IMR-90 (cell line): ENCODE measurements at regions of chr12 and their contacts with region 1.

Region 1: DNA sequence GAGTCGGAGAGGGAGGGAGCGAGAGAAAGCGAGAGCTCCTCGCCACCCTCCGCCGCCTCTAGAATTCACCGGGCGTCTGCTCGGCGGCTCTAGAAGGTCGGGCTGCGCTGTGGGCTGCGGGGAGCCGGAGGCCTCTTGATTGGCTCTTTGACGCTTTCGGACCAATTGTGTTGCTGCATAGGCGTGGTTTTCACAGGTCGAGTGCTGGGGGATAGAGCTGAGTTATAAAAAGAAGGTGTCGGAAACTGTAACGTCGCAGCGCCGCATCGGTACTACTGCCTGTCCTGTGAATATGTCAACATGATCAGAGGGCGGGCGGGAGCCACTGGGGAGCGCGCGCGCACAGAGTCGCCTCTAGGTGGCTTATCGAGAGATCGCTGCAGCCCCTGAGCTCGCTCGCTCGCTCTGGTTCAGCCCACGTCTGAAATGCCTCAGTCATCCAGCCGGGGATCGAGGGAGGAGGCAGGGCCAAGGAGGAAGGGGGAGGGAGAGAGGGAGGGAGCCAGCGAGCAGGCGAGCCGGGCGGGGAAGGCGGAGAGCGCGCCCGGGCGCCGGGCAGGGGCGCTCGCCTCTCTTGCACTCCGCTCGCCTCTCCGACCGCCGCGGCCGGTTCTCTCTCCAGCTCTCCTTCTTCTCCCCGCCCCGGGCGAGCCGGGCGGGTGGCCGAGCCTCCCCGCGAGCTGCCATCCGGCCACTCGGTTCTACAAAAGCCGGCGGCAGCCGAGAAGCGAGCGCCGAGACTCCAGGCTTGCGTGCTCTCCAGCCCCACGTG is at the start of gene TBX3:
- DNase-seq: peak; percentile 99
- ATAC-seq: peak; percentile 81
- H3K4me3 ChIP-seq: peak within 1 kb of the TSS; percentile 69
- H3K27ac ChIP-seq: peak within 1 kb of the TSS; percentile 95
- H3K4me1 ChIP-seq: peaks cover 29% of the 10 kb centered on the region
- H3K27me3 ChIP-seq: no peaks in the 10 kb centered on the region
- CTCF ChIP-seq: peak; percentile 66
- POLR2A ChIP-seq: peak; percentile 98
- RAD21 ChIP-seq: peak; percentile 60
- total RNA-seq, gene TBX3: 15.8 and 18.6 TPM in 2 replicates

Region 2: GRCh38 chr12:114547636-114548035 is 136.6 kb before region 1 on chr12:
- CTCF ChIA-PET with region 1: no interaction called
- POLR2A ChIA-PET with region 1: no interaction called
- dilution Hi-C with region 1: no loop called
- in situ Hi-C with region 1: no loop called
- intact Hi-C with region 1: no loop called
- DNase-seq: no peak
- ATAC-seq: no peak
- H3K4me3 ChIP-seq: no peak overlapping the region
- H3K27ac ChIP-seq: no peak overlapping the region
- H3K4me1 ChIP-seq: no peaks in the 10 kb centered on the region
- H3K27me3 ChIP-seq: no peaks in the 10 kb centered on the region; the same call in none of the 2 replicates
- CTCF ChIP-seq: no peak
- POLR2A ChIP-seq: no peak
- RAD21 ChIP-seq: no peak

Region 3: DNA sequence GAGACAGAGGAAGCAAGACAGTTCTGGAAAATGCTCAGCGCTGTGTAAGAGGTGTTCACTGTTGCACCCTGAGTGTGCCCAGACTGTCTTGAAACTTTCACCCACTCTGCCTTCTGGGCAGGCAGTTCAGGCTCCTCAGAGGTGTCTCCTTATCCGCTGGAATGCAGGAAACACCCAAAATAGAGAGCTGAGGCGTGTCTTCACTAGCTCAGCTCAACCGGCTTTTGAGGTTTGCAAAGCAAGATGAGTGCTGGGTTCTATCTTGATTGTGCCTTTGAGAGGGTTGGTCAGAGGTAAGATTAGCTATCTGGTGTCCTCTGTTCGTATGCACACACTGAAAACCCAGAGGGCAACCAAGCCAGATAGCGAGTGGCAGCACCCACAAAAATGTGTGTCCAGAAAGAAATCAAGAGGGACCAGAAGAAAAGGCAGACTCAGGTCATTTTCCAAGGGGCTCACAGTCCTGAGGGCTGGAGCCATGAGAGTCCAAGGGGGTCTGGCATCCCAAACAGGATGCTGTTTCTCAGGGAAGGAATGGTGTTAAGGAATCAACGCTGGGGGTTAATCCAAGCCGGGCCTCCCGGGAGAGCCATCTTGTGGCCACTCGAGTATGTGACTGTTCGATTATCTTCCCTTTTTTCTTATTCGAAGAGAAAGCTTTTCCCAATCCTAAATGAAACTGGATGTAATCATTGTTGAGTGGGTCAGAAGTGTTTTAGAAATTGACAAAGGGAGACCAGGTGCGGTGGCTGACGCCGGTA is 47.4 kb before region 1 on chr12:
- CTCF ChIA-PET with region 1: no interaction called
- POLR2A ChIA-PET with region 1: no interaction called
- dilution Hi-C with region 1: no loop called
- in situ Hi-C with region 1: no loop called
- intact Hi-C with region 1: no loop called
- DNase-seq: peak; percentile 19
- ATAC-seq: peak; percentile 84
- H3K4me3 ChIP-seq: no peak overlapping the region
- H3K27ac ChIP-seq: no peak overlapping the region
- H3K4me1 ChIP-seq: no peaks in the 10 kb centered on the region
- H3K27me3 ChIP-seq: peaks cover 1% of the 10 kb centered on the region; the same call in 1 of the 2 replicates
- CTCF ChIP-seq: peak; percentile 58
- POLR2A ChIP-seq: no peak
- RAD21 ChIP-seq: peak; percentile 41; the same call in 1 of the 2 replicates

Region 4: DNA sequence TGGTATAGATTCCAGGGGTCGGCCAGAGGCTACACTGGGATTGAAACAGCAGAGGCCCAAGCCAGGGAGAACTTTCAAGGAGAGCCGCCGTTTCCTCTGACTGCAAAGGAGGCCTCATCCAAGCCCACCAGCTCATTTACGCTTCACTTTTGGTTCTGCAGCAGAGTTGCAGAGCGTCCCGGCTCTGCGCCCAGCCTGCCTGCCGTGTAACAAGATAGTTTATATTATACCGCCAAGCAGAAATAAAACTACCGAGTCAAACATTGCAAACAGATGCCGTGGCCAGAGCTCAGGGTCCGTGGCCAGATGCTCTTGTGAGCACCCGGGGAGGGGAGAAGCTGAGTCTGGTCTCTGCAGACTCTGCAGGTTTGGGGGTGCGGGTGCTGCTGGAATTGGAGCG is 60.4 kb after region 1 on chr12:
- CTCF ChIA-PET with region 1: no interaction called
- POLR2A ChIA-PET with region 1: interaction called, 5 read pairs
- dilution Hi-C with region 1: no loop called
- in situ Hi-C with region 1: no loop called
- intact Hi-C with region 1: loop called (anchors 2 kb)
- DNase-seq: peak; percentile 93
- ATAC-seq: peak; percentile 83
- H3K4me3 ChIP-seq: no peak overlapping the region
- H3K27ac ChIP-seq: peak overlapping the region; percentile 89
- H3K4me1 ChIP-seq: peaks cover 34% of the 10 kb centered on the region
- H3K27me3 ChIP-seq: no peaks in the 10 kb centered on the region
- CTCF ChIP-seq: no peak
- POLR2A ChIP-seq: no peak; the same call in 1 of the 2 replicates
- RAD21 ChIP-seq: no peak

Region 5: GRCh38 chr12:114903083-114903691 is 218.9 kb after region 1 on chr12:
- CTCF ChIA-PET with region 1: no interaction called
- POLR2A ChIA-PET with region 1: interaction called, 3 read pairs
- dilution Hi-C with region 1: no loop called
- in situ Hi-C with region 1: no loop called
- intact Hi-C with region 1: loop called (anchors 2 kb)
- DNase-seq: peak; percentile 96
- ATAC-seq: peak; percentile 91
- H3K4me3 ChIP-seq: peak overlapping the region; percentile 16
- H3K27ac ChIP-seq: peak overlapping the region; percentile 36
- H3K4me1 ChIP-seq: peaks cover 10% of the 10 kb centered on the region
- H3K27me3 ChIP-seq: no peaks in the 10 kb centered on the region
- CTCF ChIP-seq: no peak
- POLR2A ChIP-seq: peak; percentile 87
- RAD21 ChIP-seq: peak; percentile 37

Region 6: GRCh38 chr12:115135800-115136211 is 451.5 kb after region 1 on chr12:
- CTCF ChIA-PET with region 1: no interaction called
- POLR2A ChIA-PET with region 1: no interaction called
- dilution Hi-C with region 1: no loop called
- in situ Hi-C with region 1: no loop called
- intact Hi-C with region 1: loop called (anchors 2 kb)
- DNase-seq: peak; percentile 49
- ATAC-seq: peak; percentile 85
- H3K4me3 ChIP-seq: no peak overlapping the region
- H3K27ac ChIP-seq: peak overlapping the region; percentile 41; the same call in 1 of the 2 replicates
- H3K4me1 ChIP-seq: peaks cover 11% of the 10 kb centered on the region
- H3K27me3 ChIP-seq: no peaks in the 10 kb centered on the region
- CTCF ChIP-seq: no peak
- POLR2A ChIP-seq: no peak
- RAD21 ChIP-seq: no peak

Region 7: DNA sequence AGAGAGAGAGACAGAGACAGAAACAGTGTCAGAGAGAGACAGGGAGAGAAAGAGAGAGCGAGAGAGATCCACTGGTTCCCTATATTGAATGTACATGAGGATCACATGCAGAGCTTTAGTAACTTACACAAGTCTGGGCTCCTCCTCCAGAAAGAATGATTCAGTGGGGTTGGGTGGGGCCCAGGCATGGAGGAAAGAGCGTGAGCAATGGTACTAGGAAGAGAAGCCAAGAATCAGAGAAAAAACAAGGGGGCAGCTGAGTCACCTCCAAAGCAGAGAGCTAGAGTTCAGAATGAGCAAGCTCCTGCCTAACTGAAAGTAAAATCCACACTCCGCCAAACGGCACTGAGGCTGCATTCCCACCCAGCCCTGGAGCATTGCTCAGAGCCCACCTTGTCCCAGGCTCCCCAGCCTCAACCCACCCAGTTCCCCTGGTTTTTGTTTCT is 669.7 kb after region 1 on chr12:
- CTCF ChIA-PET with region 1: no interaction called
- POLR2A ChIA-PET with region 1: no interaction called
- dilution Hi-C with region 1: no loop called
- in situ Hi-C with region 1: no loop called
- intact Hi-C with region 1: loop called (anchors 2 kb)
- DNase-seq: peak; percentile 98
- ATAC-seq: peak; percentile 97
- H3K4me3 ChIP-seq: peak overlapping the region; percentile 49
- H3K27ac ChIP-seq: peak overlapping the region; percentile 94
- H3K4me1 ChIP-seq: peaks cover 6% of the 10 kb centered on the region
- H3K27me3 ChIP-seq: no peaks in the 10 kb centered on the region
- CTCF ChIP-seq: no peak
- POLR2A ChIP-seq: peak; percentile 85
- RAD21 ChIP-seq: peak; percentile 39